Ascending aorta (tissue), 2 donors: ENCODE measurements at regions of chr10 and their contacts with region 1.

Region 1: GRCh38 chr10:4234661-4235060 is 449.7 kb upstream of the KLF6 start:
- DNase-seq: no peak
- H3K4me3 ChIP-seq: no peak overlapping the region
- H3K27ac ChIP-seq: no peak overlapping the region
- H3K4me1 ChIP-seq: peaks cover 0 to 5% of the 10 kb centered on the region in 2 donors
- H3K27me3 ChIP-seq: no peaks in the 10 kb centered on the region
- CTCF ChIP-seq: no peak

Region 2: DNA sequence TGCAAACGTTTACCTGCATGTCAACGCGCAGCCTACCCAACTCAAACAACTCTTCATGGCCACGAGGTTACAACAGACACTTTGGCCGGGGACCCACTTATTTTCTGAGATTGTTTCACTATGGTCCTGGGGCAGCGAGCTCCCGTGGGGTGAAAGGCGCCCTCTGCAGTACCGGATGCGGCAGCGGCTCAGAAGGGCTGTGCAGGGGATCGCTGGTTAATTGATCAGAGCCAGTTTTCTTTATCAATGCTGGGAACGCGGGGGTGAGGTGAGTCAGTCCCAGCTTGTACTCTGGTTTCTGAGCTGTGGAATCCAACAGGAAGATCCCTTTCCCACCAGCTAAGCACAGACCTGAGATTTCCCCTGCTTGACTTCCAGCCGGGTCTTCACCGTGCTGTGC is 83.2 kb before region 1 on chr10:
- intact Hi-C with region 1: no loop called
- DNase-seq: no peak
- H3K4me3 ChIP-seq: no peak overlapping the region
- H3K27ac ChIP-seq: no peak overlapping the region
- H3K4me1 ChIP-seq: no peaks in the 10 kb centered on the region
- H3K27me3 ChIP-seq: no peaks in the 10 kb centered on the region
- CTCF ChIP-seq: no peak

Region 3: DNA sequence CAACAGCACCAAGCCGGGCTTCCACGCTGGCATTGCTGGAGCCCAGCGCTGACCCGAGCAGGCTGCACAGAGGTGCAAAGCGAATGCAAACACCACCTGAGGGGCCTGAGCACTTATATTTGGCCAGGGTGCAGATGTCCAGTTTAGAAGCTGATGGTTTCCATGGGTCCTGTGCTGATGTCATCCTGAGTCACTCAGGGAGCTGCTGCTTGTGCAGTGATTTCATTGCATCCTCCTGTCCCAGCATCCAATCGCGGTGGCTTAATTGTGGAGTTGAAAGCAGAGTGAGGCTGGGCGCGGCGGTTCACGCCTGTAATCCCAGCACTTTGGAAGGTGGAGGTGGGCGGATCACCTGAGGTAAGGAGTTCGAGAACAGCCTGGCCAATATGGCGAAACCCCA is 39.4 kb before region 1 on chr10:
- intact Hi-C with region 1: loop called (anchors 5 kb)
- DNase-seq: no peak
- H3K4me3 ChIP-seq: no peak overlapping the region
- H3K27ac ChIP-seq: no peak overlapping the region
- H3K4me1 ChIP-seq: peaks cover 0 to 5% of the 10 kb centered on the region in 2 donors
- H3K27me3 ChIP-seq: no peaks in the 10 kb centered on the region
- CTCF ChIP-seq: no peak

Region 4: GRCh38 chr10:4283846-4284610 is 49.4 kb after region 1 on chr10:
- intact Hi-C with region 1: no loop called
- DNase-seq: peak; percentile 61 to 94
- H3K4me3 ChIP-seq: no peak overlapping the region
- H3K27ac ChIP-seq: peak overlapping the region; percentile 86 to 92
- H3K4me1 ChIP-seq: peaks cover 9 to 57% of the 10 kb centered on the region in 2 donors
- H3K27me3 ChIP-seq: no peaks in the 10 kb centered on the region
- CTCF ChIP-seq: no peak